ENCODE measurements at regions of chr3 and their contacts with region 1.

Region 1: DNA sequence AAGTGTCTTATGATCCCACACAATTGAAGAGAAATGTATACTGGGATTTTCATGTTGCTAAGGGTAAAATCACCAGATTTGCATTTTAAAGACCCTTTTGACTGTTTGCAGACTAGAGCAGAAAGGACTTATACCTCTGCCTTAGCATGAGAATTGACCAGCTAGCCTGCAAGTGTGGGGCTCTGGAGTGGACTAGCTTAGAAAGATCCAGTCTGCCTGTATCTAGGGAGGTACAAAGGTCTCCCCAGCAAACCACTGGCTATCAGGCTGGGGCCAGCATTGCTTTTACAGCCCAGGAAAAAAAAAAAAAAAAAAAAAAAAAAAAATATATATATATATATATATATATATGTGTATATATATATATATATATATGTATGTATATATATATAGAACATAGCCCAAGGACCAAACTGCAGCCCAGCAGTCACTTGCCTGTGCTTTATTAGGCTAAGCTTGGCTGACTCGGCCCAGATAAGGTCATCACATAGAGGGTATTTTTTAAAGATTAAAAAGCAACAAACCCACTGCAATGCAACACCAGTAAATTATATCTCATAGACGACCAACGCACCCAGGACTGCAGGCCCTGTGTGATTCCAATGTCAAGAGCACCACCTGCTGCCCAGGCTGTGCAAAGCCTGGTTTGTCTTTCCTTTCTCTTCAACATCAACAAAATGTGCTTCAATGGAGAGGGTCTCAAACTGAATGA is 63.7 kb downstream of the DCLK3 start:
- DNase-seq: no peak
- H3K4me3 ChIP-seq: no peak overlapping the region
- H3K27ac ChIP-seq: no peak overlapping the region
- H3K4me1 ChIP-seq: no peaks in the 10 kb centered on the region
- H3K27me3 ChIP-seq: peaks cover 0 to 4% (median 0%) of the 10 kb centered on the region in 7 donors
- CTCF ChIP-seq: peak in 10 of 11 experiments; percentile 14 to 74 (median 58)
- POLR2A ChIP-seq: no peak

Region 2: GRCh38 chr3:35965908-35966307 is 734.8 kb before region 1 on chr3:
- intact Hi-C with region 1: loop called (anchors 5 kb)
- DNase-seq: no peak
- H3K4me3 ChIP-seq: no peak overlapping the region
- H3K27ac ChIP-seq: no peak overlapping the region
- H3K4me1 ChIP-seq: peaks cover 0 to 23% (median 7%) of the 10 kb centered on the region in 6 donors
- H3K27me3 ChIP-seq: no peaks in the 10 kb centered on the region
- CTCF ChIP-seq: peak in 9 of 11 experiments; percentile 11 to 57 (median 43)
- POLR2A ChIP-seq: no peak